ENCODE measurements at regions of chr14 and their contacts with region 1.

Region 1: DNA sequence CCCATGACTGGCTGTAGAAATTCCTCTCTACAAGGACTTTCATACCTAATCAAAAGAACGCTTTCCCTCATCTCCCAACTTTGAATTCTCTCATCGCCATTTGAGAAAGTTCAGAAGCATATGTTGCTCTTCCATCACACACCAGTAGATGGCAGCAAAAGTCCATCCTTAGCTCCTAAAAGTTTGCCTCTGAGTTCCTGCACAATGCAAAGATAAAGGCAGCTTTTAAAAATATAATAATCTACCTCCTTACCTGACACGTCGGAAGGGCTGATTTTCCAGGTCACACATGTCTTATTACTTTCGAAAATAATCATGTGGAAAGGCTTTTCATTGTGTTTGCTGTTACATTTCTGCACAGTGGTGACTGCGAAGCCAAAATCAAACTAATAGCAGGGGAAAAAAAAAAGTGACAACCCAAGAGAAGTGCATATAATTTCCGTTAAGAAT is 456.7 kb upstream of the SEL1L start:
- DNase-seq: no peak
- ATAC-seq: no peak

Region 2: GRCh38 chr14:81710234-81710845 is 280.0 kb before region 1 on chr14:
- intact Hi-C with region 1: loop called (anchors 5 kb)
- DNase-seq: no peak
- ATAC-seq: no peak

Region 3: DNA sequence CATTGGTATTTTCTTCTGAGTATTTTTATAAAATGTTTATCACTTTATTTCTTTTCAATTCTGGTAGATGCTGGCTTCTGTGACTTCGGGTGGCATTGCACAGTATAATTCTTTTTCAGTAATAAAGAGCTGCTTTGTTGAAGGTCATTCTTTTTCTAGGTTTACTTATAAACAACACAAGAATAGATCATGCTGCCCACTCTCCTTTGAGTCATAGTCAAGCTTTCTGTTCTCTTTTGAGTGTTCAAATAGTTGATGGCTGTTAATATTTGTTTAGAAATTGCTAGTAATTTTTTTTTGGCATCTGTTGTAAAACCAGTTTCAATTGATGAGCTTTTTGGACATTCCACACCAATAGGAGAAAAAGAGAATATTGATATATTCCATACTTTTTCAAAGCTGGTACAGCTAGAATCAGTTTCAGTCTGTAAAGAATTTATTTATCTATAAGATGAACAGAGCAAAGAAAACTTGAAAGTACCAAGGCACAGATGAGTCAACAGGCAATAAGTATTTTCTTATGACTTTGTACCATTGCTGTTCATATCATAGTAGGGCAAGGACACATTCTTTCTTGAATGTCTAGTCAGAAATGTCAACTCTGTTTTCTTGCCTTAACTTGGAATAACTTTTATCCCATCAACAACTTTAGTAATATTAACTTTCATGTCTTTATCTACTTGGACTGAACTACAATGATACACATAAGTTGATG is 56.3 kb after region 1 on chr14:
- intact Hi-C with region 1: no loop called
- DNase-seq: no peak
- ATAC-seq: no peak